Posterior vena cava (tissue), 2 donors: ENCODE measurements at regions of chr9 and their contacts with region 1.

Region 1: GRCh38 chr9:98207606-98208005 is 15.2 kb upstream of the CORO2A start:
- DNase-seq: no peak

Region 2: GRCh38 chr9:98074115-98074990 is 133.3 kb before region 1 on chr9:
- intact Hi-C with region 1: loop called in 1 of 2 experiments (anchors 10 kb)
- DNase-seq: peak; percentile 84

Region 3: DNA sequence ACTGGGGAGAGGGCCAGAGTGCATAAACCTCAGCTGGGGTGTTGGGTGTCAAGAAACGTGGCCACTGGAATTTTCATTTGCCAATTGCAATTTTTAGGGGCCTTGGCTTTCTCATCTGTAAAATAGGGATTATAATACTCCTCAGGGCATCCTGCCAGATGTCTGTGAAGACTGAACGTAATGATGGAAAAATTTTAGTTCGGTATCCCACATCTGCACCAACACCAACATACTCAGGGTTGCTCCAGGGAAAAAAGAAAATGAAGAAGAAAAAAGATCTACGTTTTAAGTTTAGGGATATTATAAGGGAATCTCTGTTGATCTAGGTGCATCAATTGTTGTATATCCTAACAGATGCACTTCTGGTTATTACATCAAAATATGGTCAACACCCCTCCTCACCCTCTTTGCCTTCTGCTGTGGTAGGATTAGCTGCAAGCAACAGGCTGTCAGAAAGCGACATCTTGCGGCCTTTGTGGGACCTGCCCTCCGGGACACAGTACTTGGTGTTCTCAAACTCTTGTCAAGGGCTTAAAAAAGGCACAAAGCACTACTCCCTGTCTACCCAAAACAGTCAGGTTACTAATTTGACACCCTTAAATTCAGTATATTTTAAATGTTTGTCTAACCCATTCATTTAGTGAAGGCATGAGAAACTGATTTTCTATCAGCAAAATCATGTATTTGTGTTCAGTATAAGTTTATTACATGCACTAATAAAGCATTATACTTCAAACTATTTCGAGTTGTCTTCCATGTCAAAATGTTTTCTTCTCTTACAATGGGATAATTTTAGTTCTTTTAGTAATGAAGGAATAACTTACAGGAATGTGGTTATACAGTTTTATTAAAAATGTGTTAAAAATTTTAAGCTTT is 56.1 kb after region 1 on chr9:
- intact Hi-C with region 1: loop called in 1 of 2 experiments (anchors 5 kb)
- DNase-seq: peak; percentile 93

Region 4: GRCh38 chr9:98642661-98643312 is 435.2 kb after region 1 on chr9:
- intact Hi-C with region 1: no loop called
- DNase-seq: no peak